ENCODE measurements at regions of chr9 and their contacts with region 1.

Region 1: GRCh38 chr9:113275157-113276131 is at the starts of genes CDC26 and PRPF4:
- DNase-seq: peak; percentile 92
- ATAC-seq: peak; percentile 93
- H3K4me3 ChIP-seq: peak within 1 kb of the TSS; percentile 94
- H3K27ac ChIP-seq: peak within 1 kb of the TSS; percentile 72
- H3K4me1 ChIP-seq: peaks cover 9% of the 10 kb centered on the region
- H3K27me3 ChIP-seq: no peaks in the 10 kb centered on the region
- CTCF ChIP-seq: no peak
- total RNA-seq, gene CDC26: 32.4 and 34.7 TPM in 2 replicates
- total RNA-seq, gene PRPF4: 27.4 and 32.1 TPM in 2 replicates

Region 2: GRCh38 chr9:113221003-113221799 is 54.2 kb before region 1 on chr9 and contains the starts of genes FKBP15 and SLC31A1:
- CTCF ChIA-PET with region 1: no interaction called
- POLR2A ChIA-PET with region 1: no interaction called
- intact Hi-C with region 1: loop called (anchors 2 kb)
- DNase-seq: peak; percentile 95
- ATAC-seq: peak; percentile 96
- H3K4me3 ChIP-seq: peak within 1 kb of the TSS; percentile 88
- H3K27ac ChIP-seq: peak within 1 kb of the TSS; percentile 55
- H3K4me1 ChIP-seq: peaks cover 25% of the 10 kb centered on the region
- H3K27me3 ChIP-seq: no peaks in the 10 kb centered on the region
- CTCF ChIP-seq: no peak
- total RNA-seq, gene FKBP15: 10.7 and 15.0 TPM in 2 replicates
- total RNA-seq, gene SLC31A1: 9.2 and 9.7 TPM in 2 replicates

Measured in PC-3 (cell line).